Activated CD4-positive, alpha-beta T cell treated with anti-CD3 and anti-CD28 coated beads for 36 hours (primary cell): ENCODE measurements at regions of chr9 and their contacts with region 1.

Region 1: DNA sequence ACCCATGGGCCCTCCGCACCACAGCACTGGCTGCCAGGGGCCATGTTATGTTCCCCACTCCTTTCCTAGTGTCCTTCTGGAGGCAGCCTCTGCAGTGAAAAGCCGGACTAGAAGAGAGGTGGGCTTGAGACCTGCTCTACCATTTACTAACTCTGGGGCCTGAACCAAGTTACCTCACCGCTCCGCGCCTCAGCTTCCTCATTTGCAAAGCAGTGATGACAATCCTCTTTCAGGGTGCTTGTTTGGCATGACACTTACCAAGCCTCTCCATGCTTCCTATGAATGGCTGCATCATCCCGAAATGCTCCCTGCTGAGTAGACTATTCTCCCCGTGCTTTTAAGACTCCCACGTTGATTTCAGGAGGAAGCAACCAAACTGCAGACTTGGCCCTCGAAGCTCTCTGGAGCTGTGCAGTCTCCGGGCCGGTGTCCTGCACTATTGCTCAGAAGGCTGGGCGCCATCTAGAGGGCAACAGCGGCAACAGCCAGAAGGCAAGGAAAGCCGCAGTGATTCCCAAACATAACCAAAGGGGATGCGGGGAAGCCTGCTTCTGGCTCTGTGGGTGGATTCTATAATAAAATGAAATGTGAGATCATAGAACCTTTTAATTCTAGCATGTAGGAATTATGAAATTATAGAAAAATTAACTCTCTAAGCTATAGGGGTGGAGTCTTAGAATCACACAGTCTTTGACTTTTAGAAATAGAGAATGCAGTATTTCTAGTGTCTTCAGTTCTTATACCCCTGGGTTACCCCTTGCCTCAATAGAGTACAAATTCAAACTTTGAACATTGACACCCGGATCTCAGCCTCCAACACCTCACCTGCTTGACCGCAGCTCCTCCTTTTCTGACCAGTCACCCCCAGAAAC is 599.8 kb upstream of the BRINP1 start:
- DNase-seq: peak; percentile 72
- ATAC-seq: peak; percentile 47
- H3K4me3 Mint-ChIP-seq: no peak overlapping the region
- H3K27ac Mint-ChIP-seq: no peak overlapping the region
- H3K4me1 Mint-ChIP-seq: peaks cover 2% of the 10 kb centered on the region
- H3K27me3 Mint-ChIP-seq: peaks cover 17% of the 10 kb centered on the region

Region 2: GRCh38 chr9:119556129-119556875 is 412.8 kb before region 1 on chr9:
- CTCF ChIA-PET with region 1: interaction called, 6 read pairs
- POLR2A ChIA-PET with region 1: no interaction called
- intact Hi-C with region 1: loop called in 1 of 2 experiments (anchors 5 kb)
- DNase-seq: peak; percentile 79
- ATAC-seq: peak; percentile 75
- H3K4me3 Mint-ChIP-seq: no peak overlapping the region
- H3K27ac Mint-ChIP-seq: no peak overlapping the region
- H3K4me1 Mint-ChIP-seq: no peaks in the 10 kb centered on the region
- H3K27me3 Mint-ChIP-seq: peaks cover 27% of the 10 kb centered on the region

Region 3: DNA sequence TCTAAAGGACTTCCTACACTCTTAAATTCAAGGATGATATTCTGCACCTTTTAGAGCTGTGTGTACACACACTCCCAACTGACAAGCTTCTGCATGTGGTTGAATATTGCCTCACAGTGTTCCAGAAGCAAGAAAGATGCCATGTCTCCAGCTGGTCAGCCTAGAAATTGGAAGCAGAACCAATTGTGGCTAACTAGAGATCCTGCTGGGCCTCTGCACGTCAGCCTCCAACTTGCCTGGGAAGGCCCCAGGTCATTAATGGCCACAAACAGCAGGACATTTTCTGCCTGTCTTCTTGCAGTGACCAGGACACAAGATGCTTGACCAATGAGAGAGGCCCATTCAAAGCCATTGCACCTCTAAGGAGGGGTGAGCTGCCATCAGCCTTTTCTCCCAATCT is 28.0 kb before region 1 on chr9:
- CTCF ChIA-PET with region 1: no interaction called
- POLR2A ChIA-PET with region 1: no interaction called
- intact Hi-C with region 1: no loop called
- DNase-seq: no peak
- ATAC-seq: no peak
- H3K4me3 Mint-ChIP-seq: no peak overlapping the region
- H3K27ac Mint-ChIP-seq: no peak overlapping the region
- H3K4me1 Mint-ChIP-seq: no peaks in the 10 kb centered on the region
- H3K27me3 Mint-ChIP-seq: peaks cover 2% of the 10 kb centered on the region

Region 4: GRCh38 chr9:119998614-119999013 is 29.5 kb after region 1 on chr9:
- CTCF ChIA-PET with region 1: no interaction called
- POLR2A ChIA-PET with region 1: no interaction called
- intact Hi-C with region 1: no loop called
- DNase-seq: no peak
- ATAC-seq: no peak
- H3K4me3 Mint-ChIP-seq: no peak overlapping the region
- H3K27ac Mint-ChIP-seq: no peak overlapping the region
- H3K4me1 Mint-ChIP-seq: no peaks in the 10 kb centered on the region
- H3K27me3 Mint-ChIP-seq: peaks cover 1% of the 10 kb centered on the region